Activated T-helper 1 cell treated with anti-CD3 and anti-CD28 coated beads, Interleukin-12 subunit alpha, Interleukin-12 subunit beta, Interleukin-2, Interleukin-4 antibody, amounts not matched to agents 30 ng/mL and 10 ng/mL and 1 ng/mL, durations not matched to agents 14 hours and 24 hours and 36 hours (primary cell): ENCODE measurements at regions of chr3 and their contacts with region 1.

Region 1: DNA sequence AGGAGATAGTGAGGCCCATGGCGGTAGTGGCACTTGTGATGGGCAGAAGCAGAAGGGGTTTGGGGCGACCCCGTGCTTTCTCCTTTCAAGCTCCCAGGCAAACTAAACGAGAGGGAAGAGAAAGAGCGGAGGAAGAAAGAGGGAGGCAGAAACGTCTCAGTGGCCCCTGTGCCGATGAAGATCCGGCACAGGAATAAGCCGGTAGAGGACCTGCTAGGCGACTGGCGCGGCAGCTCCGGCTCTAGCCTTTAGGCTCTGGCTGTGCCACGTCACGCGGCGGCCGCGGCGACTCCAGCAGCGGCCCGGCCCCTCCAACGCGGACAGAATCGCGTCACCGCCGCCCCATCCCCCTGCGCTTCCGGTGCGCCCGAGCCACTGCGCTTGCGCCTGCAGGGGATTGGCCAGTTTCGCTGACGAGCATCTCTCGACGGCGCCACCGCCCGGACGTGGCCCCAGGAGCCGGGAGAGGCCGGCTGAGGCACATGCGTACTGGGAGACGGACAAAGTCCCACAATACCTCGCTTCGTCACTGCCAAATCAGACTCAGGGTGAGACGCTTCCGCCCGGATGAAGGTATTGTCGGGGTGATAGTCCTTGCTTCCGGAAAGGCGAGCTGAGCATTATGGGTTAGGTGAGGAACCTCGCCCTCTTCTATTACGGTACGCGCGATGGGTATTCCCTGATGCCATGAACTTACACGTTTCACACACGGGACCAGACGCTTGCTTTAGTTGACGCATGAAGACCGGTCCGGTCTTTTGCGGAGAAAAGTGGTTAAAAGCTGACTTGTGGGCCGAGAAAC is at the start of gene ARF4:
- DNase-seq: peak; percentile 100
- H3K4me3 Mint-ChIP-seq: peak within 1 kb of the TSS; percentile 98
- H3K27ac Mint-ChIP-seq: peak within 1 kb of the TSS; percentile 100
- H3K4me1 Mint-ChIP-seq: peaks cover 40% of the 10 kb centered on the region
- H3K27me3 Mint-ChIP-seq: no peaks in the 10 kb centered on the region
- total RNA-seq, gene ARF4: 93.2 and 97.0 TPM in 2 replicates

Region 2: DNA sequence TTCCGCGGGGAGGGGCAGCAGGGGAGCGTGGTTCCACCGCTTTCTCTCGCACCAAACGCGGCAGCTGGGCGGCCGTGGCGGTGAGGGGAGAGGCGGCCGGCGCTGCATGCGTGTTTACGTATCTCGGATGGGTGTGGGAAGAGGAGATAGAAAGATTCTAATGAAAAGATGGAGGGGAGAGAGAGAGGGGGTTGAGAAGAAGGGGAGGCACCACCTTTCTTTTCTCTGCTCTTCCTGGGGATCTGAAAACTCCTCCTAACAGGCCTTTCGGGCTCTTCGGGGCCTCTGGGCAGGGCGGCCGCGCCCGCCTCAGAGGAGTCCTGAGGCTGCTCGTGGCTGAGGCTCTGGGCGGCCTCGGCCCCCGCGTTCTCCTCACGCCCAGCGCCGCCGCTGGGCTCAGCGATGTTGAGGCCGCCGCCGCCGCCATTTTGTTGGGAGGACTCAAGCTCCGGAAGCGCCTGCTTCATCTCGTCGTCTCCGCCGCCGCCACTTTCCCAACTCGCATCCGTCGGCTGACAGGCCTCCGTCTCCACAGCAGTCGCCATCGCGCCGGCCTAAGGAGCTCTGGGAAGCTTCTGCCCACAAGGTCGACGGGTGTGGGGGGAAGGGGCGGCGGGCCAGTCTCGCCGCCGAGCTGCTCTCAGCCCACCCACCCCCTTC is 914.7 kb before region 1 on chr3:
- intact Hi-C with region 1: loop called (anchors 5 kb)
- DNase-seq: peak; percentile 77
- H3K4me3 Mint-ChIP-seq: peak overlapping the region; percentile 97
- H3K27ac Mint-ChIP-seq: peak overlapping the region; percentile 96
- H3K4me1 Mint-ChIP-seq: peaks cover 45% of the 10 kb centered on the region
- H3K27me3 Mint-ChIP-seq: peaks cover 2% of the 10 kb centered on the region

Region 3: DNA sequence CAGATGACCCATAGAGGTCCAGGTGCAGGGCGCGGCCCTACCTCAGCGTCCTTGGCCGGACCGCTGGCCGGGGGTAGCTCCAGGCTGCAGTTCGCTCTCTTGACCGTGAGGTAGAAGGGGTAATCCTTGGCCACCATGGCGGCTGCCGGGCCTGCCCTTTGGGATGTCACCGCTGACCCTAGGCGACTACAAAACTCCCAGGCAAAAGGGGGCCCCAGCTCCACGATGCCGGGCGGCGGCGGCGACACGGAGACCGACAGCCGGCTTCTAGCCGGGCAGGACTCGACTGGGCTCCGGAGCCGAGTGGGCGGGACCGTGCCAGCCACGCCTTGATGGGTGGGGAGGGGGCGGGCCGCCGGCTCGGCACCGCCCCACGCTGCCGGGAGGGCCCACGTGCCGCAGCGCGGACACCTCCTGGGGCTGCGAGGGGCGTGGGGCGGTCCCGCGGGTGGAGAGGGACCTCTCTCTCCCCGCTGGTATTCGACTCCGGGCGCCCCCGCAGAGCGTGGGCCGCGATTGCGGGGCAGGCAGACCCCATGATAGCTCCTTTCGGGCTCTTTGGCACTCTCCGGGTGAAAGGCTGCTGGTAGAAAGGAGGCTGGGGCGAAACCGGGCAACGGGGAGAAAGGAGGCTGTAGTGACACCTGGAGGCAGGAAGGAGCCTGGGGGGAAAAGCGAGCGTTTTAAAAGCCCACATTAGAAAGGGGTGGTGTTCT is 795.5 kb before region 1 on chr3 and contains the start of gene ARHGEF3:
- intact Hi-C with region 1: loop called (anchors 5 kb)
- DNase-seq: peak; percentile 77
- H3K4me3 Mint-ChIP-seq: peak within 1 kb of the TSS; percentile 95
- H3K27ac Mint-ChIP-seq: peak within 1 kb of the TSS; percentile 92
- H3K4me1 Mint-ChIP-seq: peaks cover 51% of the 10 kb centered on the region
- H3K27me3 Mint-ChIP-seq: no peaks in the 10 kb centered on the region
- total RNA-seq, gene ARHGEF3: 59.2 and 64.1 TPM in 2 replicates

Region 4: DNA sequence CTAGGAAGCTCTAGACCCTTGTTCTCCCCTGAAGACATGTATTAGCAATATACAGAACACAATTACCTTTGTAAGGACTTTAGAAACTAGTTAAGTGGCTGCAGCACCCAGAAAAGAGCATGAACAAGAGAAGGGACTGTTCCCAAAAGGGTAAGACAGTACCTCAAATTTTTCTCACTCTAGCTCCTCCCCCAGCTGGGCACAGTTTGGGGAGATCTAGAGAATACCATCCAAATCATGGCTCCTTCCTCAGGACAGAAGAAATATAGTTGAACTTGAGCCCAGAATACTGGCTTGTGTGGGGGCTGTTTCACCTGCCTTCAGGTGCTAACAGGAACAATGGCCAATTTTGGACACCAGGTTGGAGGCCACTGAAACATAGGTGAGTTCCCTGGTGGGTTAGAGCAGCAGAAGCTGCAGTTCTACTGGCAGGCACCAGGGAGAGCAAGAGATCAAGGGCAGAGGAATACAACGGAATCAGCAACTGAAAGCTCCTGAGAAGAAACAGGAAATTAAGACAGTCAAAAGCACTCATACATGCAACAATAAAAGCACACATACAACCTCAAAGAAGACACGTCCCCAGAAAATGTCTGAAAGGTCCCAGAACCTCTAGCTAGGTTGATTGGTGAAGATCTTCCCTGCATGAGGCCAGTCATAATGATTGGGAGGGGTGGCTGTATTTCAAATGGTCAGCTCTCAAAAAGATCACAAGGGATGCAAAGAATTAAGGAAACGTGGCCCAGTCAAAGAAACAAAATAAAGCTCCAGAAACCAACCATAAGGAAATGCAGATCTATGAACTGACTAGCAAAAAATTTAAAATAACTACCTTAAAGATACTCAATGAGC is 199.9 kb before region 1 on chr3:
- intact Hi-C with region 1: loop called (anchors 1 kb)
- DNase-seq: peak; percentile 48
- H3K4me3 Mint-ChIP-seq: no peak overlapping the region
- H3K27ac Mint-ChIP-seq: no peak overlapping the region
- H3K4me1 Mint-ChIP-seq: peaks cover 10% of the 10 kb centered on the region
- H3K27me3 Mint-ChIP-seq: peaks cover 13% of the 10 kb centered on the region

Region 5: DNA sequence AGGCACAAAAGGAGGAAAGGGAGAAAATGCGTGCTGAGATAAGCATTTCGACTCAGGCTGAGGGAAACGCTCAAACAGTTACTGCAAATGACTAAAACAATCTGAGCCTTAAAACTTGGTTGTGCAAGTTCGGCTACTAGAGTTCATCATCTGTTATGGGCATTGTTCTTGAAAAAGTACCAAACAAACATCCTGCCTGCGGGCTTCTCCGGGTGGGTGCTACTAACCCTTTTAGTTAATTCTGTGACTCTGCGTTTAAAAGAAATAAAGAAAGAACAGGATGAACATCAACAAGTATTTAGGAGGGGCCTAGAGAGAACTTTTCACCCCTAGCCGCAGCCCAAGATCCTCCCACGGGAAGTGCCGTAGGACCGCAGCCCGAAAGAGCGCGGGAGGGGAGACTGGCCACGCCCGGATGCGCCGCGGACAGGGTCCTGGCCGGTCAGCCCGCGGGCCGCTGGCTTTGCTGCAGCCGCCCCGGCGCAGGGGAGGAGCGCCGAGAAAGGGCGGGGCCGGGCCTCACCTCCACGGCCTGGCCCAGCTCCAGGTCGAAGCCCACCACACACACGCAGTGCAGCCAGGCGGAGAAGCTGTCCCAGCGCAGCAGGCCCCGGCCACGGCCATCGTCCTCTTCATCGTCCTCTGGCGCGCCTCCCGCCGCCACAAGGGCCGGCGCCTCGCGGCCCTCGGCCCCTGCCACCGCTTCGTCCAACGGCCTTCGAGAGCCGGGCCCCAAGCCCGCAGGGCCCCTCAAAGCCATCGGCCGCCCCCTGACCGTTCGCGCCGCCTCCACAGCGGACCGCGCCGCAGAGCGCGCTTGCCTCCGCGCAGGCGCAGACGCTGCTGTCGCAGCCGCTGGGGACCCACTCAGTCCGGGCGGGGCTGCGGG is 95.2 kb after region 1 on chr3 and contains the start of gene DENND6A:
- intact Hi-C with region 1: loop called (anchors 1 kb)
- DNase-seq: peak; percentile 94
- H3K4me3 Mint-ChIP-seq: peak within 1 kb of the TSS; percentile 91
- H3K27ac Mint-ChIP-seq: peak within 1 kb of the TSS; percentile 91
- H3K4me1 Mint-ChIP-seq: peaks cover 30% of the 10 kb centered on the region
- H3K27me3 Mint-ChIP-seq: peaks cover 3% of the 10 kb centered on the region
- total RNA-seq, gene DENND6A: 23.6 and 26.2 TPM in 2 replicates

Region 6: DNA sequence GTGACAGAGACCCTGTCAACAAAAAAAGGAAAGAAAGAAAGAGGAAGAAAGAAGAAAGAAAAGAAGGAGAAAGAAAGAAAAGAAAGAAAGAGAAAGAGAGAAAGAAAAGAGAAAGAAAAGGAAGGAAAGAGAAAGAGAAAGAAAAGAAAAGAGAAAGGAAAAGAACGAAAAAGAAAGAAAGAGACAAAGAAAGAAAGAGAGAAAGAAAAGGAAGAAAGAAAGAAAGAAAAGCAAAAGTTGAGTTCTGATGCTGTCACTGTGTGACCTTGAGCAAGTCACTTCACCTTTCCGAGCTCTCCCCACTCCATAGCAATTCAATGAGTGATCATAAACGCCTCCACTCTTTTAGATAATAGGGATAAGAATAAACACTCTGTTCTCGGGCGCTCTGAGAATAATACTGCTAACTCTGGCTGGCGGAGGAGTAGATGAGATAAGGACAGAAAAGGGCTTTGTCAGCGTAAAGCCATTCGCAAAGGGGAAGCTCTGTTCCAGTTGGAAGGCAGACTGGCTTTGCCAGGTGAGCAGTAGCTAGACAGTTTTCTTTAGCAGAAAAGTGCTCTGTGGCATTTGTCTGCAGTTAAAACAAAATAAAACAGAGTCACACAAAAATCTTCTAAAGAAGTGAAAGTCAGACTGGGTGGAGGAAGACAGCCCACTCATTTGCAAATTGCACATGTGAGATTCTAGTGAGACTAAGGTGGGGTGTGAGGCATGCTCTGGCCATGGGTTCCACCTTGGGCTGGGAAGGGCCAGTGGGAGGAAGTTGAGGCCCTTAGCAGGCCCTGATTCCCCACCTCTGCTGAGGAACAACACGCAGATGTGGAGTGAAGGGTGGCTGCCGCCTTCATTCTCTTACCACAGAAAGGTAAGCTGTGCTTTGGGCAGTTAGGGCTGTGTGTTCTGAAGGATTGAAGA is 401.3 kb after region 1 on chr3:
- intact Hi-C with region 1: no loop called
- DNase-seq: no peak
- H3K4me3 Mint-ChIP-seq: peak overlapping the region; percentile 52
- H3K27ac Mint-ChIP-seq: peak overlapping the region; percentile 5
- H3K4me1 Mint-ChIP-seq: peaks cover 22% of the 10 kb centered on the region
- H3K27me3 Mint-ChIP-seq: peaks cover 2% of the 10 kb centered on the region

Region 7: DNA sequence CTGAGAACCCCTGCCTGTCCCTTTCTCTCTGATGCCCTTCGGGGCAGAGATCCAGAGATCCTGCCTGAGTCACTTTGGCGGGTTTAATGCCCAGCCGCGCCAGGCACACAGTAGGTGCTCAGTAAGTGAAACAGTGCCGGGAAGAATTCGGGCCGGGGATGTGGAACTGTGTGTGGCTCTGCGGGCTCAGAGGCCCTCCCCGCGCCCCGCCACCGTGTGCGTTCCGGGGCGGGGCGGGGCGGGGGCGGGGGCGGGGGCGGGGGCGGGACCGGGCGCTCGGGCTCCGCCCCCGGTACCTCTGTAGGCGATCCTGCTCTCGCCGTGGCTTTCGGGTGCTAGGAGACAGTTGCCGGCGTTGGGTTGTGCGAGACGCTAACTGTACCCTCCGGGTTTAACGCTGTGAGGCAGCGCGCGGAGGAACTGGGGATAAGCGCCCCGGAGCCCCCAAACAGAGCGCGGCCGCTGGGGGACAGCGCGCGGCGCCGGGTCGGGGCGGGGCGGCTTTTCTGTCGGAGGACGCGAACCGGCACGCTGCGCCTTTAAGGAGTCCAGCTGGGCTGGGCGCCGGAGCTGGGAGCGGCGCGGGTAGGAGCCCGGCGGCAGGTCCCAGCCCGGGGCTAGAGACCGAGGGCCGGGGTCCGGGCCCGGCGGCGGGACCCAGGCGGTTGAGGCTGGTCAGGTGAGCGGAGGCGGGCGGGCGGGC is 640.1 kb after region 1 on chr3 and contains the start of gene ABHD6:
- intact Hi-C with region 1: loop called (anchors 10 kb)
- DNase-seq: peak; percentile 78
- H3K4me3 Mint-ChIP-seq: peak within 1 kb of the TSS; percentile 90
- H3K27ac Mint-ChIP-seq: peak within 1 kb of the TSS; percentile 67
- H3K4me1 Mint-ChIP-seq: peaks cover 12% of the 10 kb centered on the region
- H3K27me3 Mint-ChIP-seq: peaks cover 32% of the 10 kb centered on the region
- total RNA-seq, gene ABHD6: 9.2 and 10.1 TPM in 2 replicates